Mammary epithelial cell (primary cell): ENCODE measurements at regions of chr12 and their contacts with region 1.

Region 1: GRCh38 chr12:30026621-30027234 is 243.0 kb upstream of the TMTC1 start:
- DNase-seq: peak; percentile 72
- H3K4me3 ChIP-seq: no peak overlapping the region
- H3K27ac ChIP-seq: no peak overlapping the region
- H3K4me1 ChIP-seq: peaks cover 16% of the 10 kb centered on the region
- H3K27me3 ChIP-seq: no peaks in the 10 kb centered on the region
- CTCF ChIP-seq: no peak

Region 2: GRCh38 chr12:30067146-30067545 is 40.4 kb after region 1 on chr12:
- CTCF ChIA-PET with region 1: no interaction called
- dilution Hi-C with region 1: loop called (anchors 5 kb)
- in situ Hi-C with region 1: no loop called
- intact Hi-C with region 1: no loop called
- DNase-seq: no peak
- H3K4me3 ChIP-seq: no peak overlapping the region
- H3K27ac ChIP-seq: no peak overlapping the region
- H3K4me1 ChIP-seq: no peaks in the 10 kb centered on the region
- H3K27me3 ChIP-seq: peaks cover 3% of the 10 kb centered on the region
- CTCF ChIP-seq: no peak

Region 3: GRCh38 chr12:30525171-30525570 is 498.4 kb after region 1 on chr12:
- CTCF ChIA-PET with region 1: no interaction called
- dilution Hi-C with region 1: no loop called
- in situ Hi-C with region 1: no loop called
- intact Hi-C with region 1: no loop called
- DNase-seq: no peak
- H3K4me3 ChIP-seq: no peak overlapping the region
- H3K27ac ChIP-seq: no peak overlapping the region
- H3K4me1 ChIP-seq: no peaks in the 10 kb centered on the region
- H3K27me3 ChIP-seq: no peaks in the 10 kb centered on the region
- CTCF ChIP-seq: no peak